ENCODE measurements at regions of chr9 and their contacts with region 1.

Region 1: GRCh38 chr9:95510709-95511615 is 5.8 kb downstream of the PTCH1 start:
- DNase-seq: peak; percentile 91
- H3K4me3 ChIP-seq: peak overlapping the region; percentile 74 to 98 (median 94)
- H3K27ac ChIP-seq: peak overlapping the region; percentile 83
- H3K4me1 ChIP-seq: peaks cover 28% of the 10 kb centered on the region
- H3K27me3 ChIP-seq: peaks cover 0 to 2% of the 10 kb centered on the region in 2 experiments
- CTCF ChIP-seq: no peak
- POLR2A ChIP-seq: peak; percentile 69

Region 2: GRCh38 chr9:95268681-95269080 is 242.3 kb before region 1 on chr9:
- CTCF ChIA-PET with region 1: interaction called, 3 read pairs
- POLR2A ChIA-PET with region 1: no interaction called
- dilution Hi-C with region 1: no loop called
- intact Hi-C with region 1: loop called (anchors 1 kb)
- DNase-seq: peak; percentile 47
- H3K4me3 ChIP-seq: no peak overlapping the region
- H3K27ac ChIP-seq: no peak overlapping the region
- H3K4me1 ChIP-seq: no peaks in the 10 kb centered on the region
- H3K27me3 ChIP-seq: no peaks in the 10 kb centered on the region
- CTCF ChIP-seq: peak; percentile 12 to 37
- POLR2A ChIP-seq: no peak

Region 3: DNA sequence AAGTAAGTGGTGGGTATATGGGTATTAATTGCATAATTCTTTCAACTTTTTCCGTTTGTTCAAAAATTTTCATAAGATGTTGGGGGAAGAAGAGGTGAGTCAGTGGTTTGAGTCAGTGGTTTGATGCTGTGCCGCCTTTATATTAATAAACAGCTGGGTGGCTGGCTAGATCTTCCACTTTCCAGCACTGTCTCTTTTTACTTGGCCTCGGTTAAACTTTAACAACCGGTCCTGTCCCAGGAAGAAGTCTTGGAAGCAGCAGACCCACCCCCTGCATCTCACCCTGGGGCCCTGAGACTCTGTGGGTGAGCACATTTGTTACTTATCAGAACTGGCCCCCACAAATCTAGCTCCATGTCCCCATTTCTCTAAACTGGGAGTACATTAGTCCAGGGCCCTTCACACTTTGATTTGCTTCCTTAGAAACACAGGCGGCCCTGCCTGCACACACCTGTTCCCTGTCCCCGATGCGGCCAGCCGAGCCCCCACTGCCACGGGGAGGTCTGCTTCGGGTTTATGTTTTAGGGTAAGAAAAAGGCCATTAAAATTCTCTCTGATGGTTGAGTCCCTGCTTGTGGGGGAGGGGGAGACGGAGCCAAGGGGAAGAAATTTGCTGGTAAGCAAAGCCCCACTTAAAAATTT is 84.9 kb before region 1 on chr9:
- CTCF ChIA-PET with region 1: no interaction called
- POLR2A ChIA-PET with region 1: no interaction called
- dilution Hi-C with region 1: no loop called
- intact Hi-C with region 1: loop called (anchors 2 kb)
- DNase-seq: no peak
- H3K4me3 ChIP-seq: peak overlapping the region in 1 of 3 experiments; percentile 30
- H3K27ac ChIP-seq: no peak overlapping the region
- H3K4me1 ChIP-seq: peaks cover 9% of the 10 kb centered on the region
- H3K27me3 ChIP-seq: no peaks in the 10 kb centered on the region
- CTCF ChIP-seq: no peak
- POLR2A ChIP-seq: no peak

Region 4: DNA sequence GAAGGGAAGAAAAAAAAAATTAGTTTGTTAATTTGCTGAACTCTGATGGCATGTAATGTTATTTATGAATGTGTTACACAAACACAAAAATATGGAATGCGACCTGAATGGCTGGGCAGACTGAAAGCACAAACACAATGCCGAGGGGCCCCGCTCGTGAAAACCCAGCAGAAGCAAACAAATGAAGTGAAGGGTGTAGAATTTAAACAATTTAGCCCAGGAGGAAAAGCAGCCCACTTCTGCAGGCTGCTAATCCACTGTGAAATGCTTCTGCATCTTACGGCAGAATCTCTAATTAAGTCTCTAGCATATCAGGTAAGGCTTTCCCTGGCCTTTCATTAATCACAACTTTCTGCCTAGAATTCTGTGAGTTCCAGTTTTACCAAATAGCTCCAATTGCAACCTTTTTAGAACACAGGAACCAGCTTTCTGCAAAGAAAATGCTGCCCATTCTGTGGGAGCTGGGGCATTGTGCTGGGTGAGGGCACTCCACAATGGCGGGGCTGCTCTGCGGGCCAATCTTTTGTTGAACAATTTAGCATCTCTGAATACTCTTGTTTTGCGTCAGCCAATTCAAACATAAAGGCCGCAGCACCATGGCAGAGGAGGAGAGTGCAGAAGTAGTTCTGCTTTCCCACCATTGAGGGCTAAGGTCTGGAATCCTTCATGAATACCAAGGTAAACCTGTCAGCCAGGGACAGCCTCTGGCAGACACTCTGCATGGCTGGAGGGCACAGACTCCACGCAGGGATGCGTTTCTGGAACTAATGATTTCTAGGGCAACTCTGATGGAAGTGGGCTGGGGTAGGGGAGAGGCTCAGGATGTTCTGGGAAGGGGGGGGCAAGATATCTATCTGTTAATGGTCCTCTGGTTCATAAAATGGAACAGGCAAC is 60.5 kb before region 1 on chr9:
- CTCF ChIA-PET with region 1: no interaction called
- POLR2A ChIA-PET with region 1: no interaction called
- dilution Hi-C with region 1: no loop called
- intact Hi-C with region 1: no loop called
- DNase-seq: no peak
- H3K4me3 ChIP-seq: no peak overlapping the region
- H3K27ac ChIP-seq: no peak overlapping the region
- H3K4me1 ChIP-seq: no peaks in the 10 kb centered on the region
- H3K27me3 ChIP-seq: no peaks in the 10 kb centered on the region
- CTCF ChIP-seq: no peak
- POLR2A ChIP-seq: no peak

Region 5: GRCh38 chr9:95574176-95574575 is 63.2 kb after region 1 on chr9:
- CTCF ChIA-PET with region 1: interaction called, 4 read pairs
- POLR2A ChIA-PET with region 1: no interaction called
- dilution Hi-C with region 1: no loop called
- intact Hi-C with region 1: loop called (anchors 1 kb)
- DNase-seq: no peak
- H3K4me3 ChIP-seq: no peak overlapping the region
- H3K27ac ChIP-seq: no peak overlapping the region
- H3K4me1 ChIP-seq: peaks cover 14% of the 10 kb centered on the region
- H3K27me3 ChIP-seq: peaks cover 2 to 5% of the 10 kb centered on the region in 2 experiments
- CTCF ChIP-seq: no peak
- POLR2A ChIP-seq: no peak

Region 6: GRCh38 chr9:95726756-95727155 is 215.8 kb after region 1 on chr9:
- CTCF ChIA-PET with region 1: interaction called, 3 read pairs
- POLR2A ChIA-PET with region 1: no interaction called
- dilution Hi-C with region 1: no loop called
- intact Hi-C with region 1: loop called (anchors 5 kb)
- DNase-seq: peak; percentile 57
- H3K4me3 ChIP-seq: no peak overlapping the region
- H3K27ac ChIP-seq: no peak overlapping the region
- H3K4me1 ChIP-seq: no peaks in the 10 kb centered on the region
- H3K27me3 ChIP-seq: no peaks in the 10 kb centered on the region
- CTCF ChIP-seq: peak; percentile 56 to 67
- POLR2A ChIP-seq: no peak

Region 7: DNA sequence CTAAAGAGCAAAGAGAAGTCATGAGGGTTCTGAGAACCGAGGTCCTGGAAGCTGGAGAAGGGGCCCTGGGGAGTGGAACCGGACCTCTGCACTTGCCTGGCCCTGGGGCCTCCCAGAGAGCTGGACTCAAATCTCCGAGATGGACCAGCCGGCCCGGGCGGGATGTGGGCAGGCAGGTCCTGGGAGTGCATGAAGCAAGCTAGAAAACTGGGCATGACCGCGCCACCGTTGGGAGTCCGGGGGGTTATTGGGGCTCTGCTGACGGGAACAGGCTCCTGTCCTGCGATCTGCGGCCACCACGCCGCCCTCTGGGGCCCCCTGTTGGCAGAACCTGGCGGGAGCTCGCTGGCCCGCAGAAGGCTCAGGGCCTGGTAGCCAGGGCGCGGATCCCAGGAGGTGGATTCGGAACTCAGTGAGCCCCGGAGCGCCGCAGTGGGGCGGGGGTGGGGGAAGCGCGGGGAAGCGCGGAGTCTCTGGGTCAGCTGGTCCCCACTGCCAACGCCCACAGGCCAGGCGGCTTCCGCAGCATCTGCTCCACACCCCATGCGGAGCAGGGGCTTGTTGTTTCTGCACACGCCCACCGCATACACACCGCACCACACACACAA is 515.1 kb after region 1 on chr9:
- CTCF ChIA-PET with region 1: no interaction called
- POLR2A ChIA-PET with region 1: no interaction called
- dilution Hi-C with region 1: no loop called
- intact Hi-C with region 1: loop called (anchors 5 kb)
- DNase-seq: no peak
- H3K4me3 ChIP-seq: no peak overlapping the region
- H3K27ac ChIP-seq: no peak overlapping the region
- H3K4me1 ChIP-seq: peaks cover 4% of the 10 kb centered on the region
- H3K27me3 ChIP-seq: peaks cover 34 to 40% of the 10 kb centered on the region in 2 experiments
- CTCF ChIP-seq: peak; percentile 11 to 30
- POLR2A ChIP-seq: no peak

Region 8: DNA sequence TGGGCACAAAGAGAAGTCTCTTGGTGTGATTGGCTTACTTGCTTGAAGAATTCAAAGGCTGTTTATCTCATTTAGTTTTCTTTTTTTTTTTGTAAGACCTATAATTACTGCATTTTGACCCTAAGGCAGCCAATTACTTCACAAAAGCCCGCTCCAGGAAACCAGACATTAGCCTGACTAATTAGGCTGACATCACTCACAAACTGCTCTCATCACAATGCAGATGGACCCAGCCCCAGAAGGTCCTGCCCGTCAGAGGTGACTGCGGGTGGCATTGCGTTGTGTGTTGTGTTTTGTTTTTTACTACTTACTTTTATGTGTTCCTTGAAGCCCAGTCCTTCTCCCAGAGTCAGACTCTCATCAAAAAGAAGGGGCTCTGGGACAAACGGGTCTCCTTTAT is 618.7 kb after region 1 on chr9:
- CTCF ChIA-PET with region 1: no interaction called
- POLR2A ChIA-PET with region 1: no interaction called
- dilution Hi-C with region 1: no loop called
- intact Hi-C with region 1: loop called (anchors 2 kb)
- DNase-seq: peak; percentile 86
- H3K4me3 ChIP-seq: peak overlapping the region in 1 of 3 experiments; percentile 35
- H3K27ac ChIP-seq: peak overlapping the region; percentile 77
- H3K4me1 ChIP-seq: peaks cover 33% of the 10 kb centered on the region
- H3K27me3 ChIP-seq: no peaks in the 10 kb centered on the region
- CTCF ChIP-seq: no peak
- POLR2A ChIP-seq: no peak

Region 9: GRCh38 chr9:96344458-96345180 is 833.7 kb after region 1 on chr9:
- CTCF ChIA-PET with region 1: no interaction called
- POLR2A ChIA-PET with region 1: no interaction called
- dilution Hi-C with region 1: no loop called
- intact Hi-C with region 1: no loop called
- DNase-seq: peak; percentile 83
- H3K4me3 ChIP-seq: no peak overlapping the region
- H3K27ac ChIP-seq: peak overlapping the region; percentile 51
- H3K4me1 ChIP-seq: peaks cover 18% of the 10 kb centered on the region
- H3K27me3 ChIP-seq: no peaks in the 10 kb centered on the region
- CTCF ChIP-seq: no peak
- POLR2A ChIP-seq: no peak

Measured in endothelial cell of umbilical vein (primary cell).